Calu3 (cell line): ENCODE measurements at regions of chr2 and their contacts with region 1.

Region 1: GRCh38 chr2:231411831-231412617 is 16.5 kb downstream of the B3GNT7 start:
- DNase-seq: peak; percentile 95
- H3K4me3 Mint-ChIP-seq: peak overlapping the region; percentile 66
- H3K27ac Mint-ChIP-seq: no peak overlapping the region
- H3K4me1 Mint-ChIP-seq: peaks cover 17% of the 10 kb centered on the region
- H3K27me3 Mint-ChIP-seq: no peaks in the 10 kb centered on the region
- CTCF ChIP-seq: peak; percentile 91

Region 2: GRCh38 chr2:230847883-230848388 is 564.1 kb before region 1 on chr2:
- CTCF ChIA-PET with region 1: no interaction called
- intact Hi-C with region 1: loop called (anchors 10 kb)
- DNase-seq: peak; percentile 94
- H3K4me3 Mint-ChIP-seq: peak overlapping the region; percentile 28
- H3K27ac Mint-ChIP-seq: no peak overlapping the region
- H3K4me1 Mint-ChIP-seq: no peaks in the 10 kb centered on the region
- H3K27me3 Mint-ChIP-seq: peaks cover 48% of the 10 kb centered on the region
- CTCF ChIP-seq: peak; percentile 95

Region 3: DNA sequence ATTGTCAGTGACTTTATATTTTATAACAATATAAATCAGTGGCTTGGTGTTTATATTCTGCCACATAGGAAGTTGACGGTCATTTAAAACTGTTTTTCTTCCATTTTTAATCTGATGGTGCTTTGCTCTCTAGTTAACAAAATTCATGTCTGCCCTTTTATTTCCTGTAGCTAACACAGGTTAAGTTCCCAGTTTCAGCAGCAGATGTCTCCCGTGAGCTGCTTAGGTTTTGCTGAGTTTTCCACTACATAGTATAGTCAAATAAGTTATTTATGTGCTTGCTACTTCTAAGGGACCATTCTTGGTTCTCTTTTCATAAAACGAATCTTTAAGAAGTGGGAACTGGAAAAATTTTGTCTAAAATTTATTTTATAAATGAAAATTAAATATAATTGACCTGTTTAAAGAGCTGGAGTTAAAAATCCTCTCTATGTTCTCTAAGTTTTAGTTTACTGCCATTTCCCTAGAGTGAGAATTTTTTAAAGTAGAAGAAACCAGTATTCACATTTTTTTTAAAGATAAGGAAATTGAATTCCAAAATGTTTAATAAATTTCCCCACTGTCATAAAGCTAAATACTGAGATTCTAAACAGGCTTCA is 307.8 kb before region 1 on chr2:
- CTCF ChIA-PET with region 1: interaction called, 7 read pairs
- intact Hi-C with region 1: loop called (anchors 10 kb)
- DNase-seq: peak; percentile 61
- H3K4me3 Mint-ChIP-seq: no peak overlapping the region
- H3K27ac Mint-ChIP-seq: no peak overlapping the region
- H3K4me1 Mint-ChIP-seq: peaks cover 10% of the 10 kb centered on the region
- H3K27me3 Mint-ChIP-seq: no peaks in the 10 kb centered on the region
- CTCF ChIP-seq: peak; percentile 67

Region 4: GRCh38 chr2:231227309-231228162 is 184.5 kb before region 1 on chr2:
- CTCF ChIA-PET with region 1: interaction called, 8 read pairs
- intact Hi-C with region 1: loop called (anchors 1 kb)
- DNase-seq: peak; percentile 72
- H3K4me3 Mint-ChIP-seq: no peak overlapping the region
- H3K27ac Mint-ChIP-seq: no peak overlapping the region
- H3K4me1 Mint-ChIP-seq: peaks cover 23% of the 10 kb centered on the region
- H3K27me3 Mint-ChIP-seq: no peaks in the 10 kb centered on the region
- CTCF ChIP-seq: peak; percentile 77

Region 5: GRCh38 chr2:231541645-231542044 is 129.6 kb after region 1 on chr2:
- CTCF ChIA-PET with region 1: no interaction called
- intact Hi-C with region 1: no loop called
- DNase-seq: no peak
- H3K4me3 Mint-ChIP-seq: no peak overlapping the region
- H3K27ac Mint-ChIP-seq: no peak overlapping the region
- H3K4me1 Mint-ChIP-seq: no peaks in the 10 kb centered on the region
- H3K27me3 Mint-ChIP-seq: peaks cover 28% of the 10 kb centered on the region
- CTCF ChIP-seq: no peak